ENCODE measurements at regions of chr3 and their contacts with region 1.

Region 1: DNA sequence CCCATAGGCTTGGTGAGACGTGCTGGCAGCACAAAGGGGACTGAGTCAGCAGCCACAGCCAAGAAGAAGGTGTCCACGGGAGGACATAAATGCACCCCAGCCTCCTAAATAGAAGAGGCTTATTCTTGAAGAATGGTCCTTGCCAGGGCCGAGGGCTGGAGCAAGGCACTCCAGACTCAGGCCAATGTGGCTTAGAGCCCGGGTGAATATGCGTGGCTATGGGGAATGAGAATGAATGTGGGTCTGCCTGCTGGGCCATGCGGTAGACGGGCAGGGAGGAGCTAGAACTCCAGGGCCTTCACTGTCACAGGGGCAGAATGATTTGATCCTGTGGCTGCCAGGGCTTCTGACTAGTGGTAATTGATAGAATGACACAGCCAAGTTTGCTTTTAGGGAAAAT is 34.0 kb downstream of the DHX30 start:
- DNase-seq: peak in 17 of 42 donors; percentile 18 to 77 (median 50)

Region 2: GRCh38 chr3:48151058-48151806 is 314.2 kb after region 1 on chr3:
- intact Hi-C with region 1: loop called (anchors 5 kb)
- DNase-seq: peak; percentile 38 to 87 (median 72)